Pancreas (tissue), 10 donors: ENCODE measurements at regions of chr3 and their contacts with region 1.

Region 1: DNA sequence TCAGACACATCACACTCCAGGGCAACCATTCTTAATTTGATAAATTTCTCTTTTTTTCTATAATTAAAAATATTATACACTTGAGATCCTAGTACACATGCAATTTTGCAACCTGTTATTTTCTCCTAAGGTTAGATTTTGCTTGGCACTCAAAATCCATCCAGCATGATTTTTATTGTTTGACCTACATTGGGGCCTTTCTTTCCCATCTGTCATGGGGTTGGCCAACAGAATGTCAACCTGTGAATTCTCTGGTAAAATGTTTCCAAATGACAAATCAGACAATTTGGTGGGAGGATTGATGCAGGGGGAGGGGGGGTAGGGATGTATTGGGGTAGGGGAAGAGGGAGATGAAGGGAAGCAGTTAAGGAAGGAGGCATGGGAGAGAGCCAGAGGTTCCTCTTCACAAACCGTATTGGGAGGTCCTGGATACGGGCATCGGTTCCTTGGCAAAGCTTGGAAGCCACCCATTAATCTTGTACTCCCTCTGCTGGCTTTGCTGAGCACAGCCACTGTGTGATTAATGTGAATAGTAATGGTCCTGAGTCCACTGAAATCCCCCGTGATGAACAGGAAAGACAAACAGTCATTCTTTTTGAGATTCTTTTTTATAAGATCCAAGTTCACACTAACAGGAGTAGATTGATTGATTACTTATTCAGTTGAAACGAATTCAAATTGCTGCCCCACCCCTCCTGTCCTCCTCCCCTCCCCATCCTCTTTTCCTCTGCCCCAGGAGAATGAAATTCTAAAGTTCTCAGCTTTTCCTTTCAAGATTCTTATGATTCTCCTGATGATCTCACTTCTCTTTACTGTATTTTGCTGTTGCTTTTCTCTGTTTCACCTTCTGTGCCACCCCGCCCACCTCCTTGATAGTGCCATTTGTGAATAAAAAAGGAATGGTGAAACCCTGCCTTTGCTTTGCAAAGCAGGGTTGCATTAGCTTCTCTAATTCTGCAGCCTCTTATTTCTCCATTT is 82.2 kb upstream of the SLC25A26 start:
- DNase-seq: peak in 4 of 6 donors; percentile 25 to 63 (median 34)
- ATAC-seq: peak; percentile 80 to 98 (median 95)
- H3K4me3 ChIP-seq: no peak overlapping the region
- H3K27ac ChIP-seq: no peak overlapping the region
- H3K4me1 ChIP-seq: no peaks in the 10 kb centered on the region
- H3K27me3 ChIP-seq: no peaks in the 10 kb centered on the region
- CTCF ChIP-seq: peak; percentile 52 to 57 (median 52)

Region 2: DNA sequence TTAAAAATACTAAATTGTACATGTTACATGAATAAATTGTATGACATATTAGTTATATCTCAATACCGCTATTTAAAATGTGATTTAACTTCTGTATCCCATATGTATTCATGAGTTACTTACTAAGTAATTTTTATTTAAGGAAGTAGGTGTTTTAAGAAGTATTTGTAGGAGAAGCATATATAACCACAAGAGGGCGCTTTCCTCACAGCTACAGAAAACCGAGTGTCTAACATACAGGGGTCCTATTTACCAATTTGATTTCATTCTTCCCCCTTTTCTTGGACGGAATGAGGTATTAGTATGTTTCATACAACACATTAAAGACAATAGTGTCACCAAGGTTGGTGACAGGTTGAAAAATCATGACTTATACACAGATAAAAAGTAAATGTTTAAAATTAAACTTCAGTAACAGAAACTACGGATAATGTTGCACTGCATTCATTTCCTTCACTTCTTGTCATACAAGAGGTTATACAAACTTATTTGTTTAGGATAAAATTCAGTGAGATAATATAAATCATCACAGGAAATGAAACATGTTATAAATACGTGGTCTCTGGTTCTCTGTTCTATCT is 353.5 kb before region 1 on chr3:
- intact Hi-C with region 1: loop called in 2 of 3 experiments (anchors 5 to 10 kb)
- DNase-seq: no peak
- ATAC-seq: peak; percentile 59 to 76 (median 61)
- H3K4me3 ChIP-seq: no peak overlapping the region
- H3K27ac ChIP-seq: no peak overlapping the region
- H3K4me1 ChIP-seq: peaks cover 0 to 6% (median 5%) of the 10 kb centered on the region in 3 donors
- H3K27me3 ChIP-seq: no peaks in the 10 kb centered on the region
- CTCF ChIP-seq: peak; percentile 30 to 79 (median 66)

Region 3: DNA sequence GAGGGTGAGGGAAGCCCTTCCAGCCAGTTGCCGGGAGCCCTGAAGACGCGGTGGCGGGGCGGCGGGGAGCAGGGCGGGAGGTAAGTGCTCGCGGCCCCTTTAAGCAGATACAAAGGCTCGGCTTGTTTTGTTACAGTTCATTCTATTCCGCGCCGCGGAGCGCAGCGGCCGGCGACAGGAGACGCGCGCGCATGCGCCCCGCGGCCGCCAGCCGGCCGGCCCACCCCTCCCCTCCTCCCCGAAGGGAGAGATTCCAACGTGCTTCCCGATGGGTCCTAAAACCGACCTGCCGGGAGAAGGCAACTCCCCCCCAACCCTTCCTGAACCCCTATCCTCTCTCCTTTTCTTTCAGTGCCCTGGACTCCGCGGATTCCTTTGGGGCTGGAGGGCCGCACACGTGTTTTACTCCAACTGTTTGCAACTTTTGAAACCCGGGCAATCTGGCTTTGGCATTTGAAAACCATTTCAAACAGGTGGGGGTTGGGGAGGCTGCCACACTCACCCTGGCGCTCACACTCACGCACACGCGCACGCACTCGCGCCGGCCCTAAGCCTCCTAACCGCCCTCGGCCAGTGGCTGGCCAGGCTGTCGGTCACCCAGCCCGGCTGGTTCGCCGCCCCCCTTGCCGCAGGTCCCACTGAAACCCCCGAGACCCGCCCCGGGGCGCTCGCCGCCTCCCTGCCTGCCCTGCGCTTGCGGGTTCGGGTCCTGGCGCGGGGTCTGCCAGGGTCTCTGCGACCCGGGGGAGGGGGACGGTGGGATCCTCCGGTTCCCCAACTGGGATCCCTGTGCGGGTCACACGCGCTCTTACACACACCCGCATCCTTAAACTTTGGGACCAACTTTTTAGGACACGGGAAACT is 99.7 kb before region 1 on chr3 and contains the start of gene MAGI1:
- intact Hi-C with region 1: no loop called
- DNase-seq: peak; percentile 91 to 96 (median 95)
- ATAC-seq: peak; percentile 77 to 89 (median 87)
- H3K4me3 ChIP-seq: peak within 1 kb of the TSS; percentile 32 to 85 (median 76)
- H3K27ac ChIP-seq: peak within 1 kb of the TSS; percentile 77 to 96 (median 92)
- H3K4me1 ChIP-seq: peaks cover 0 to 10% (median 0%) of the 10 kb centered on the region in 3 donors
- H3K27me3 ChIP-seq: no peaks in the 10 kb centered on the region
- CTCF ChIP-seq: no peak
- total RNA-seq, gene MAGI1: 22.1 to 45.1 (median 28.1) TPM